ENCODE measurements at regions of chr11 and their contacts with region 1.

Region 1: DNA sequence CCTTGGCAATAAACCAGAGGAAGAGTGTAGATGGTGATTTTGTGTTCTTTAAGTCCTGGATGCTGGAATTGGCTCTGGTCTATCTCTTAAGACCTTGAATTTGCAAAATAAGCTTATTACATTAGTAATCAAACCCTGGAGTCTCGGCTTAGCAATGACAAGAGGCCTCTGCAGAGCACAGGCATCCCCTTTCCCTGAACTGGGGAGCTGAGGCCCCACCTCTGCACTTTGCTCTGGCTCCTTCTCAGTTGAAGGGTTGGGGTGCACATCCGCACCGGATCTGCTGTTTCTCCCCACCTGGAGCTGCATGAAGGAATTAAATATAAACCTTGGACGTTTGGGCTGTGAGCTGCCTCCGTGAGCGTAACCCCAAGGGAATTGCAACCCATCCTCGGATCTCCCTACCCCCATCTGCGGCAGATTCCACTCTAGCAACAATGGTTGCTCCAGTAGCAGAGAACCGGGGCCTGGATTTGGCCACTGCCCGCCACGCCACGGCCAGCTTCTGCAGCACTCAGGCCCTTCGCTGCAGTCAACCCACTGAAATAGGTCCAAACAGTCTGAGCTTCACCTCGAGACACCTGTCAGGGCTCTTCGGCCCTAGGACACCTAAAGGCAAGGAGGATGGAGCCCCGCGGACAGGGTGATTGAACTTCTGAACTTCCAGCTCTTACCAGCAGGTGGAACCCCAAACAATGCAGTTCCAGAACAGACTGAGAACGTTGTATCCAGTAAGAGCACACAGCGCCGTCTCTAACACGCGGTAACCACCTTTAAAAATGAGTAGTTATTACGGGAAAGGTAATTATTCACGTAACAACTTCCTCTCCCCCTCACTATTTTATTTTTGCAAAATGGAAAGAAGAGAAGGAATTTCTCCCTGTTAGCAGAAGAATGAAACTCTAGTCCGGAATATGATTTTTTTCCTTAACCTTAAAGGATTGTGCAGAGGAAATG is 54.8 kb upstream of the CAPRIN1 start:
- DNase-seq: peak; percentile 49
- ATAC-seq: peak; percentile 96
- H3K4me3 ChIP-seq: no peak overlapping the region; the same call in 1 of the 2 replicates
- H3K27ac ChIP-seq: no peak overlapping the region
- H3K4me1 ChIP-seq: peaks cover 25% of the 10 kb centered on the region
- H3K27me3 ChIP-seq: peaks cover 3 to 5% of the 10 kb centered on the region in 2 experiments; a peak in 3 of 4 replicates
- CTCF ChIP-seq: peak; percentile 82 to 89 (median 84); a peak in 5 of 6 replicates
- EP300 ChIP-seq: no peak
- POLR2A ChIP-seq: no peak
- RAD21 ChIP-seq: peak; percentile 87

Region 2: DNA sequence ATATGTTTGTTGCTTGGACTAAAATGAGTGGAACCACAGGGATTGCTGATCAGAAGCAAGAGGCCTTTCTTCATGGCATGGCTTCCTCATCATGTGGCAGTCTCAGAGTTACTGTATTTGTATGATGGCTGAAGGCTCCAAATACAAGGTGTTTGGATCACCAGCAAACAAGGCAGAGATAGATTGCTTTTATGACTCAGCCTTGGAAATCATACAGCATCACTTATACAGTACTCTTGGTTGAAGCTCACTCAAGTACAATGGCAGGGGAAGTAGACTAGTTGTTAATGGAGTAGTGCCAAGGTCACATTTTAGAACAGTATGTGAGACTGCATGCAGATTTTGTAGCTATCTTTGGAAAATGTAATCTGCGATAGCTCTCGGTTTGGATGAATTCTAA is 71.3 kb after region 1 on chr11:
- CTCF ChIA-PET with region 1: interaction called, 8 read pairs
- POLR2A ChIA-PET with region 1: interaction called, 6 read pairs
- RAD21 ChIA-PET with region 1: no interaction called
- SMC1A ChIA-PET with region 1: interaction called, 6 read pairs
- in situ Hi-C with region 1: no loop called
- intact Hi-C with region 1: loop called (anchors 5 kb)
- DNase-seq: no peak
- ATAC-seq: peak; percentile 64
- H3K4me3 ChIP-seq: no peak overlapping the region
- H3K27ac ChIP-seq: peak overlapping the region; percentile 45
- H3K4me1 ChIP-seq: peaks cover 31% of the 10 kb centered on the region
- H3K27me3 ChIP-seq: no peaks in the 10 kb centered on the region
- CTCF ChIP-seq: no peak
- EP300 ChIP-seq: no peak
- POLR2A ChIP-seq: no peak
- RAD21 ChIP-seq: no peak

Region 3: DNA sequence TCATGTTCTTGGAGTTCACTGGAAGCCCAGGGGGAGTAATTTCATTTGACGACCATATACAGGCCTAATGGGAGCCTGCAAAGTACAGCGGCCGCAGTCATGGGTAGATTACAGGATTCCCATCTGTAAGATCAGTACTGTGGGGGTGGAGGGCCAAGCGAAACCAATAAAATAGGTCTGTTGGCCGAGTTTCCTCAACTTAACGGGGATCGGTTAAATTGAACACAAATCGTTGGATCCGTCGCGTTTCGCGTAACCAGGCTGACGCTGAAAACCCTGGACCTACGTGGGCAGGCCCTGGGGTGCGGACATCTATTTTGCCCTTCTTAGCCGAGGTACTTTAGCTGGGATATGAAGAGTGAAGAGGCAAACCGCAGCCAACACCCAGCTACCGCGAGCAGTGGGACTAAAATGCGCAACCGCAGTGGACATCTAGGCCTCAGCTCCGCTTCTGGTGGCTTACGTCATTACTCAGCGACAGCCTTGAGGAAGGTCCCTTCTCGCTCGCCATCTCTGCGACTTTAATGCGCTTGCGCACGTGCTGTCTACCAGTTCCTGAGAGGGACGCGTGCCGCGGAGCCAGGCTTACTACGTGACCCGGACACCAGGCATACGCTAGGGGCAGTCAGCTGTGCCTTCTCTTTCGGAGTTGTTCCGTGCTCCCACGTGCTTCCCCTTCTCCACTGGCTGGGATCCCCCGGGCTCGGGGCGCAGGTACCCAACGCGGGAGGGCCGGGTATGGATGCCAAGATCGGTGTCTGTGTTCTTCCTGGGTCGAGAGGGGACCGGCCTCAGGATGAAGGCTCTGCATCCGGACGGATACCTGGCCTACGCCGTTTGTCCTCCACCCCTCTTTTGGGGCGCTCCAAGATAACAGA is 108.5 kb after region 1 on chr11 and contains the start of gene NAT10:
- CTCF ChIA-PET with region 1: interaction called, 9 read pairs
- POLR2A ChIA-PET with region 1: no interaction called
- RAD21 ChIA-PET with region 1: interaction called, 5 read pairs
- SMC1A ChIA-PET with region 1: interaction called, 7 read pairs
- in situ Hi-C with region 1: no loop called
- intact Hi-C with region 1: loop called (anchors 1 kb)
- DNase-seq: peak; percentile 99
- ATAC-seq: peak; percentile 94
- H3K4me3 ChIP-seq: peak within 1 kb of the TSS; percentile 95
- H3K27ac ChIP-seq: peak within 1 kb of the TSS; percentile 89
- H3K4me1 ChIP-seq: peaks cover 15% of the 10 kb centered on the region
- H3K27me3 ChIP-seq: no peaks in the 10 kb centered on the region
- CTCF ChIP-seq: 0 out of 6 replicates have a peak, but pooled peaks of 1 of the 3 experiments have one; percentile 17
- EP300 ChIP-seq: peak in 1 of 2 experiments; percentile 73; a peak in 2 of 4 replicates
- POLR2A ChIP-seq: peak; percentile 96
- RAD21 ChIP-seq: 0 out of 2 replicates have a peak, but pooled peaks have one; percentile 7
- polyA plus RNA-seq, gene NAT10: 45.1 to 72.5 TPM

Region 4: GRCh38 chr11:34223021-34223813 is 226.4 kb after region 1 on chr11:
- CTCF ChIA-PET with region 1: no interaction called
- POLR2A ChIA-PET with region 1: no interaction called
- RAD21 ChIA-PET with region 1: no interaction called
- SMC1A ChIA-PET with region 1: no interaction called
- in situ Hi-C with region 1: no loop called
- intact Hi-C with region 1: no loop called
- DNase-seq: no peak
- ATAC-seq: no peak
- H3K4me3 ChIP-seq: no peak overlapping the region
- H3K27ac ChIP-seq: no peak overlapping the region
- H3K4me1 ChIP-seq: no peaks in the 10 kb centered on the region
- H3K27me3 ChIP-seq: no peaks in the 10 kb centered on the region; a peak in 1 of 4 replicates
- CTCF ChIP-seq: no peak
- EP300 ChIP-seq: no peak
- POLR2A ChIP-seq: no peak
- RAD21 ChIP-seq: no peak

Region 5: DNA sequence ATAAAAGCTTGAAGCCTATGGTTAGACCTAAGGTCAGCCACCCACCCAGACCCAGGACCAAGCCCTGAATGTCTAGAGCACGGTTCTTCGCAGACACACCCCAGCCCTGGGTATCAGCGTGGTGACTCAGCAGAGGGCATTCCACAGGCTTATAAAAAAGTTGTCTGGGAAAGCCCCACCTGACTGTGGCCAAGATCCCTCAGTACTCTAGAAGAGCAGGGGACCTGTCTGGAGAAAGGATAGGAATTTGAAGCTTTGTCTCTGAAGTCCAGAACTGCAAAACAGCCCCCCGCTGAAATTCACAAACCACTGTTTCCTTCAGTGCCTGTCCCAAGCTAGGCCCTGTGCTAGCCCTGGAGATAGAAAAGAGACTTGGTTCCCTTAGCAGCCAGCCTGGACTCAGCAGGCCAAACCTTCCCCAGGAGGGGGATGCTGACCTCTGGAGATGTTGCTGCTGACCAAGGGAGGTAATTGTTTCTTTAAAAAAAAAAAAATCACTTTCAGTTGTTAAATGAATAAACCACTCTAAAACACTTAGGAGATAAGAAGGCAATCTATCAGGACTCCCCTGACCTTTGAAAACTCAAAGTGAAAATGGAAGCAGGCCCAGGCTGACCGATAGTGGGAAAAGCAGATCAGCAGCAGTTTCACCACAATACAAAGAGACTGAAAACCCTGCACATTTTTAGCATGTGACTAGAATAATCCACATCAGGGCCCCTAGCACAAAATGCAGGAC is 247.1 kb after region 1 on chr11:
- CTCF ChIA-PET with region 1: no interaction called
- POLR2A ChIA-PET with region 1: no interaction called
- RAD21 ChIA-PET with region 1: no interaction called
- SMC1A ChIA-PET with region 1: no interaction called
- in situ Hi-C with region 1: no loop called
- intact Hi-C with region 1: loop called (anchors 5 kb)
- DNase-seq: peak; percentile 86
- ATAC-seq: peak; percentile 80
- H3K4me3 ChIP-seq: no peak overlapping the region
- H3K27ac ChIP-seq: peak overlapping the region; percentile 84
- H3K4me1 ChIP-seq: peaks cover 82% of the 10 kb centered on the region
- H3K27me3 ChIP-seq: no peaks in the 10 kb centered on the region
- CTCF ChIP-seq: no peak
- EP300 ChIP-seq: peak; percentile 74 to 87
- POLR2A ChIP-seq: no peak
- RAD21 ChIP-seq: peak; percentile 29; the same call in 1 of the 2 replicates

Measured in GM12878 (cell line).